PC-3 (cell line): ENCODE measurements at regions of chr6 and their contacts with region 1.

Region 1: GRCh38 chr6:133553652-133554051 is 312.5 kb downstream of the EYA4 start:
- DNase-seq: peak; percentile 66
- ATAC-seq: peak; percentile 64
- H3K4me3 ChIP-seq: no peak overlapping the region
- H3K27ac ChIP-seq: no peak overlapping the region
- H3K4me1 ChIP-seq: peaks cover 11% of the 10 kb centered on the region
- H3K27me3 ChIP-seq: no peaks in the 10 kb centered on the region
- CTCF ChIP-seq: peak; percentile 66

Region 2: DNA sequence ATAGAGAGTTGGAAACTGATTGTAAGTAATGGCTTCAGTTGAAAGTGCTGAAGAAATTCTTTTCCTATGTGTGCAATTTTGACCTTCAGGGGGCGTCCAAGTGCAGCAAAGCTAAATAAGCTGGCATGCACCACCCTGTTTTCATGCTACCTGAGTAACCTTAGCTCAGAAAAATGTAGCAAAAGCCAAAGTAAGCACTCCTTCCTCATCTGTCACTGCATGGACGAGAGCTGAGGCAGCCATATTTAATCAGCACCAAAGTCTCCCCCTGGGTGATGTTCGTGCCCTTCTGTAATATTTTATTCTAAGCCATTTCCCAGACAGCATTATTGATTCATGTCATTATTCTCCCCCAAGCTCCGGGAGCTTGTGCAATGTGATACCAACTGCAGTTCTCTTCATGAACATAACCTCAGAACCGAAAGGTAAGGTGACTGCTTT is 616.2 kb before region 1 on chr6:
- CTCF ChIA-PET with region 1: interaction called, 3 read pairs
- POLR2A ChIA-PET with region 1: no interaction called
- intact Hi-C with region 1: loop called (anchors 2 kb)
- DNase-seq: peak; percentile 83
- ATAC-seq: peak; percentile 68
- H3K4me3 ChIP-seq: no peak overlapping the region
- H3K27ac ChIP-seq: no peak overlapping the region
- H3K4me1 ChIP-seq: peaks cover 9% of the 10 kb centered on the region
- H3K27me3 ChIP-seq: no peaks in the 10 kb centered on the region
- CTCF ChIP-seq: peak; percentile 75